Activated T-helper 1 cell treated with anti-CD3 and anti-CD28 coated beads, Interleukin-12 subunit alpha, Interleukin-12 subunit beta, Interleukin-2, Interleukin-4 antibody, amounts not matched to agents 30 ng/mL and 10 ng/mL and 1 ng/mL, durations not matched to agents 14 hours and 24 hours and 36 hours (primary cell): ENCODE measurements at regions of chr18 and their contacts with region 1.

Region 1: GRCh38 chr18:28189400-28190239 is 12.7 kb upstream of the CDH2 start:
- DNase-seq: no peak
- H3K4me3 Mint-ChIP-seq: no peak overlapping the region
- H3K27ac Mint-ChIP-seq: no peak overlapping the region
- H3K4me1 Mint-ChIP-seq: no peaks in the 10 kb centered on the region
- H3K27me3 Mint-ChIP-seq: peaks cover 2% of the 10 kb centered on the region

Region 2: DNA sequence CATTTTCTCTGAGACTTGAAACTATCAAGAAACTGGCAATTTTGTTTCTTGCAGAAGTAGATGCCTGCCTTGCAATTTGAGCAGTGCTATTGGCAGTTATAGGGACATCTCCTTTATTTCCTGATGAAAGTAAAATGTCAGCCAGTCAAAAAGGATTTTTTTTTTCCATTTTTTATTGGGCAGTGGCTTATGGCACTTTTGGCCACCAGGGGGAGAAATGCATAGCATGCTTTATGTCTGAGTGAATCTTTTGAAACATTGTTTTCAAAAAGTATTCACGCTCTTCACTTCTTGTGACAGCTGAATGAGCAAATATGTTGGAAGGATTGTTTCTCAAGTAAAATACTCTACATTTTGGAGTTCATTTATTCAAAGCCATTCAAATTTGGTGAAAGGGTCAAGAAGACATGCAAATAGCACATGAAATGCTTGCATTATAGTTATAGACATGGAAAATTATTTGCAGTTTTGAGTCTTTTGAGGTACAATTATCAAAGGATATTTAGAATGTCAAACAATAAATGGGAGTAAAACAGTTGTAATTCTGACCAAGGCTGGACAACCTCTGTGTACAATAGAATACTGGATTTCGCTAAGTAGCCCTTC is 503.7 kb before region 1 on chr18:
- intact Hi-C with region 1: loop called (anchors 5 kb)
- DNase-seq: no peak
- H3K4me3 Mint-ChIP-seq: no peak overlapping the region
- H3K27ac Mint-ChIP-seq: no peak overlapping the region
- H3K4me1 Mint-ChIP-seq: no peaks in the 10 kb centered on the region
- H3K27me3 Mint-ChIP-seq: no peaks in the 10 kb centered on the region